ENCODE measurements at regions of chr9 and their contacts with region 1.

Region 1: GRCh38 chr9:3028535-3028934 is 184.6 kb upstream of the PUM3 start:
- DNase-seq: peak; percentile 88
- H3K4me3 ChIP-seq: no peak overlapping the region
- CTCF ChIP-seq: no peak

Region 2: GRCh38 chr9:2970864-2971263 is 57.7 kb before region 1 on chr9:
- in situ Hi-C with region 1: loop called (anchors 5 kb)
- DNase-seq: no peak
- H3K4me3 ChIP-seq: no peak overlapping the region
- CTCF ChIP-seq: no peak

Region 3: GRCh38 chr9:3088166-3088702 is 59.7 kb after region 1 on chr9:
- in situ Hi-C with region 1: loop called (anchors 10 kb)
- DNase-seq: no peak
- H3K4me3 ChIP-seq: no peak overlapping the region
- CTCF ChIP-seq: no peak

Measured in astrocyte of the cerebellum (primary cell).